Activated CD4-positive, alpha-beta T cell treated with anti-CD3 and anti-CD28 coated beads, Interleukin-2, amount 10 ng/mL, durations not matched to agents 24 days and 14 days (primary cell): ENCODE measurements at regions of chr2 and their contacts with region 1.

Region 1: GRCh38 chr2:135985018-135985825 is at the start of gene DARS1:
- DNase-seq: peak; percentile 95
- H3K4me3 Mint-ChIP-seq: peak within 1 kb of the TSS; percentile 93
- H3K27ac Mint-ChIP-seq: peak within 1 kb of the TSS; percentile 100
- H3K4me1 Mint-ChIP-seq: peaks cover 48% of the 10 kb centered on the region
- H3K27me3 Mint-ChIP-seq: no peaks in the 10 kb centered on the region
- total RNA-seq, gene DARS1: 153 and 160 TPM in 2 replicates

Region 2: DNA sequence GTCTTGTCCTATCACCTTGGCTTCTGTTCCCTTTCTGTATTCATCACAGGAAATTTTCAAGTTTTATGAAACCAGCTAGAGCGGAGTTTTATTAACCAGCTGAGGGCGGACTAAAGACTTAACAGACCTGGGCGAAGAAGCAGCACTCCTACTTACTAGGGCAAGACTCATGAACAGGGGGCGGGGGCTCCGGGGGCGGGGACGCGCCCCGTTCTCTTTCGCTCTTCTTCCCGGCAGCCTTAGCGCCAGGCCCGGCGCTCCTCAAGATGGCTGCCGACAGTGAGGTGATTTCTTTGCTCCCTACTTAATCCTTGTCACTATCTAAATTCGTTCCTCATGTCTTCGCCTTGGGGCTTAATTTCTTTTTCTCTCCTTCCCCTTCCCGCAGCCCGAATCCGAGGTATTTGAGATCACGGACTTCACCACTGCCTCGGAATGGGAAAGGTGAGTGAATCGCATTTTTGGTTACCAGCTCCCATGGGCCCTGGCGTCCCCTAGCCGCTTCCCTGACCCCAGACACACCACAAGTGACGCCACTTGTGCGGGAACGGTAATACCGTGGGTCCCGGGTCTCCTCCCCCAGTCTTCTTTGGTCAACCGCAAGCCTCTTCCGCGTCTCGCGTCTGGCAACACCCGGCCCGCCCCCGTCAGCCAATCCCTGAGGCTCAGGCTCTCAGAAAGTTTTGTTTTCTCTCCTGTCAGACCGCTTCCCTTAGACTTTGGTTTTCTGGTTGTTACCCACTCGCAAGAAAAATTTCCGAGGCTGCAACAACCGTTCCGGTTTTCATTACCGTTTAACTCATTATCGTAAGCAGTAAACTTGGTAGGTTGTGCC is 933.0 kb before region 1 on chr2 and contains the start of gene RAB3GAP1:
- intact Hi-C with region 1: loop called (anchors 10 kb)
- DNase-seq: peak; percentile 98
- H3K4me3 Mint-ChIP-seq: peak within 1 kb of the TSS; percentile 94
- H3K27ac Mint-ChIP-seq: peak within 1 kb of the TSS; percentile 100
- H3K4me1 Mint-ChIP-seq: peaks cover 38% of the 10 kb centered on the region
- H3K27me3 Mint-ChIP-seq: peaks cover 2% of the 10 kb centered on the region
- total RNA-seq, gene RAB3GAP1: 24.2 and 26.3 TPM in 2 replicates

Region 3: GRCh38 chr2:135820003-135820618 is 165.1 kb before region 1 on chr2:
- intact Hi-C with region 1: no loop called
- DNase-seq: peak; percentile 93
- H3K4me3 Mint-ChIP-seq: peak overlapping the region; percentile 74
- H3K27ac Mint-ChIP-seq: peak overlapping the region; percentile 83
- H3K4me1 Mint-ChIP-seq: peaks cover 44% of the 10 kb centered on the region
- H3K27me3 Mint-ChIP-seq: no peaks in the 10 kb centered on the region

Region 4: DNA sequence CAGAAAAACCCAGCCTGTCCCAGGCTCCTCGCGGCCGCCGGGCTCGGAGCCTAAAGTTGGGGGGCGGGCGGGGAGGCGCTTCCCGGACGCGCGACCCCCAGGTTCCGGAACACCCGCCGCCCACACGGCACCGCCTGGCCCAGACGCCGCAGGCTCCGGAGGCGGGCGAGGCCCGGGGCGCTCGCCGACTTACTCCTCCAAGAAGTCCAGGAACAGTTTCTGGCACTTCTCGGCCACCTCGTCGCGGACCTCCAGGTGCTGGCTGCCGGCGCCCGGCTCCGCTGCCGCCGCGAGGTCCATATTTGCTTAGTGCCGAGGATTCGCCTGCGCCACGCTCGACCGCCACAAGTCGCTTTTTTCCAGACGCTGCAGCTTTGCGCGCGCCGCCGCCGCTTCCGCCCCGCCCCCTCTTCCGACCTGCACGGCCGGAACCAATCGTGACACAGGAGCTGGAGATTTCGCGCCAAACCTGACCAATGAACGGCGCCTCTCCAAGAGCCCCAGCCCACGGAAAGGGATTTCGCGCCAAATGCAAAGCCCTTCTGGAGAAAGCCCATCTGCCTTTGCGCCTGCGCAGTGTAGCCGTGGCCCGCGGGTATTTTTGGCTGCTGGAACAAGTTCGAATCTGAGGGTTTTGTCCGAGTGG is 109.0 kb before region 1 on chr2 and contains the start of gene MCM6:
- intact Hi-C with region 1: loop called (anchors 1 kb)
- DNase-seq: peak; percentile 100
- H3K4me3 Mint-ChIP-seq: peak within 1 kb of the TSS; percentile 83
- H3K27ac Mint-ChIP-seq: peak within 1 kb of the TSS; percentile 97
- H3K4me1 Mint-ChIP-seq: peaks cover 31% of the 10 kb centered on the region
- H3K27me3 Mint-ChIP-seq: peaks cover 2% of the 10 kb centered on the region
- total RNA-seq, gene MCM6: 196 and 197 TPM in 2 replicates

Region 5: GRCh38 chr2:135960656-135961551 is 24.3 kb before region 1 on chr2:
- intact Hi-C with region 1: loop called (anchors 1 kb)
- DNase-seq: peak; percentile 83
- H3K4me3 Mint-ChIP-seq: peak overlapping the region; percentile 58
- H3K27ac Mint-ChIP-seq: peak overlapping the region; percentile 94
- H3K4me1 Mint-ChIP-seq: peaks cover 56% of the 10 kb centered on the region
- H3K27me3 Mint-ChIP-seq: no peaks in the 10 kb centered on the region

Region 6: GRCh38 chr2:136131961-136132824 is 147.0 kb after region 1 on chr2:
- intact Hi-C with region 1: loop called (anchors 1 kb)
- DNase-seq: peak; percentile 91
- H3K4me3 Mint-ChIP-seq: peak overlapping the region; percentile 76
- H3K27ac Mint-ChIP-seq: peak overlapping the region; percentile 81
- H3K4me1 Mint-ChIP-seq: peaks cover 88% of the 10 kb centered on the region
- H3K27me3 Mint-ChIP-seq: peaks cover 23% of the 10 kb centered on the region

Region 7: GRCh38 chr2:136305517-136306192 is 320.4 kb after region 1 on chr2:
- intact Hi-C with region 1: loop called (anchors 5 kb)
- DNase-seq: peak; percentile 78
- H3K4me3 Mint-ChIP-seq: no peak overlapping the region
- H3K27ac Mint-ChIP-seq: peak overlapping the region; percentile 82
- H3K4me1 Mint-ChIP-seq: peaks cover 22% of the 10 kb centered on the region
- H3K27me3 Mint-ChIP-seq: no peaks in the 10 kb centered on the region